PC-9 (cell line): ENCODE measurements at regions of chr1 and their contacts with region 1.

Region 1: GRCh38 chr1:116997066-116997465 is 4.5 kb upstream of the CD101 start:
- DNase-seq: peak in 1 of 2 experiments; percentile 75
- H3K4me3 ChIP-seq: no peak overlapping the region
- H3K27ac ChIP-seq: peak overlapping the region; percentile 12
- H3K4me1 ChIP-seq: peaks cover 12% of the 10 kb centered on the region
- H3K27me3 ChIP-seq: no peaks in the 10 kb centered on the region
- CTCF ChIP-seq: no peak

Region 2: GRCh38 chr1:117007719-117008013 is 10.6 kb after region 1 on chr1:
- CTCF ChIA-PET with region 1: no interaction called
- POLR2A ChIA-PET with region 1: no interaction called
- intact Hi-C with region 1: loop called (anchors 1 kb)
- DNase-seq: no peak
- H3K4me3 ChIP-seq: no peak overlapping the region
- H3K27ac ChIP-seq: peak overlapping the region; percentile 38
- H3K4me1 ChIP-seq: peaks cover 24% of the 10 kb centered on the region
- H3K27me3 ChIP-seq: no peaks in the 10 kb centered on the region
- CTCF ChIP-seq: no peak

Region 3: GRCh38 chr1:117260761-117261423 is 263.8 kb after region 1 on chr1:
- CTCF ChIA-PET with region 1: no interaction called
- POLR2A ChIA-PET with region 1: no interaction called
- intact Hi-C with region 1: no loop called
- DNase-seq: no peak
- H3K4me3 ChIP-seq: no peak overlapping the region
- H3K27ac ChIP-seq: no peak overlapping the region
- H3K4me1 ChIP-seq: no peaks in the 10 kb centered on the region
- H3K27me3 ChIP-seq: no peaks in the 10 kb centered on the region
- CTCF ChIP-seq: no peak